CD14-positive monocyte (primary cell): ENCODE measurements at regions of chr9 and their contacts with region 1.

Region 1: DNA sequence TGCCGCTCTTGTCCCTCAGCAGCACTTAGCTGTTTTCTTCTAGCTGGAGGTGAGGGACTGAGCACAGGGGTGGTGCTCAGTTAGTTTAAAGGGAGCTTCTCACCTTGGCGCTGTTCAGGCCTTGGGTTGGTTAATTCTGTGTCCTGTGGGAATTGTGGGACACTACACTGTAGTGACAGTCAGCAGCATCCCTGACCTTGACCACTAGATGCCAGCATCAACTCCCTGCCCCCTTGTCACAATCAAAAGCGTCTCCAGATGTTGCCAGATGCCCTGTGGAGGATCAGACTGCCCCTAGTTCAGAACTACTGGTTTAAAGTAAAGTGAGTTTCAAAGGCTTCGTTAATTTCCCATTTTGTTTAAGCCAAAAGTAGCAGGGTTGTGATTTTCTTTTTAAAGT is 65.5 kb upstream of the DMRT3 start:
- DNase-seq: no peak
- H3K4me3 ChIP-seq: no peak overlapping the region
- H3K4me3 Mint-ChIP-seq: peak overlapping the region in 1 of 2 donors; percentile 64
- H3K27ac ChIP-seq: no peak overlapping the region
- H3K27ac Mint-ChIP-seq: no peak overlapping the region
- H3K4me1 ChIP-seq: peaks cover 0 to under 1% of the 10 kb centered on the region in 2 donors
- H3K4me1 Mint-ChIP-seq: peaks cover 7% of the 10 kb centered on the region
- H3K27me3 ChIP-seq: peaks cover 48 to 51% of the 10 kb centered on the region in 2 donors
- H3K27me3 Mint-ChIP-seq: peaks cover 32 to 61% (median 60%) of the 10 kb centered on the region in 3 donors
- CTCF ChIP-seq: no peak

Region 2: GRCh38 chr9:522658-523057 is 388.3 kb before region 1 on chr9:
- intact Hi-C with region 1: no loop called
- DNase-seq: no peak
- H3K4me3 ChIP-seq: no peak overlapping the region
- H3K4me3 Mint-ChIP-seq: no peak overlapping the region
- H3K27ac ChIP-seq: no peak overlapping the region
- H3K27ac Mint-ChIP-seq: no peak overlapping the region
- H3K4me1 ChIP-seq: no peaks in the 10 kb centered on the region
- H3K4me1 Mint-ChIP-seq: no peaks in the 10 kb centered on the region
- H3K27me3 ChIP-seq: no peaks in the 10 kb centered on the region
- H3K27me3 Mint-ChIP-seq: peaks cover 0 to 6% (median 3%) of the 10 kb centered on the region in 3 donors
- CTCF ChIP-seq: no peak

Region 3: DNA sequence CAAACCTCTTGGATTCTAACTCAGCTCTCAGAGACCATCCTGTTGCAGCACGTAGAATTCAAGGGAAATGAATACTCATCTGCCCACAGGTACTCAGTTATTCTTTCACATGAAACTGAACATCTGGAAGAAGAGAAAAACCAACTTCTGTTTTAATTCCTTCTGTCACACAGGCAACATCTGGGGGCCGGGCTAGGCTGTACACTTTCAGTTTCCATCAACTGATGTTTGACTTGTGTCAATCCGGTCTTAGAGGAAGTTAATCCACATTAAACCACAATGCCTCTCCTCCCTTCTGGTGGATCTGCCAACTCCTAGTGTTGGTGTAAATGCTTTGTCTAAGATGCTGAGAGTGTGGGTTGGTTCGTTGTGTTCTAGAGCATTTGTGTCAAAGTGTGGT is 83.0 kb after region 1 on chr9:
- intact Hi-C with region 1: loop called in 1 of 2 experiments (anchors 5 kb)
- DNase-seq: peak; percentile 48 to 68 (median 58)
- H3K4me3 ChIP-seq: no peak overlapping the region
- H3K4me3 Mint-ChIP-seq: no peak overlapping the region
- H3K27ac ChIP-seq: no peak overlapping the region
- H3K27ac Mint-ChIP-seq: peak overlapping the region in 2 of 7 donors; percentile 65 to 68
- H3K4me1 ChIP-seq: peaks cover 13 to 17% of the 10 kb centered on the region in 2 donors
- H3K4me1 Mint-ChIP-seq: peaks cover 22% of the 10 kb centered on the region
- H3K27me3 ChIP-seq: peaks cover 3 to 23% of the 10 kb centered on the region in 2 donors
- H3K27me3 Mint-ChIP-seq: peaks cover 17 to 29% (median 28%) of the 10 kb centered on the region in 3 donors
- CTCF ChIP-seq: no peak